ENCODE measurements at regions of chr4 and their contacts with region 1.

Region 1: GRCh38 chr4:24991015-24991414 is 39.7 kb downstream of the LGI2 start:
- DNase-seq: no peak
- ATAC-seq: no peak
- H3K4me3 ChIP-seq: no peak overlapping the region
- H3K27ac ChIP-seq: no peak overlapping the region
- H3K4me1 ChIP-seq: no peaks in the 10 kb centered on the region
- H3K27me3 ChIP-seq: no peaks in the 10 kb centered on the region
- CTCF ChIP-seq: no peak

Region 2: DNA sequence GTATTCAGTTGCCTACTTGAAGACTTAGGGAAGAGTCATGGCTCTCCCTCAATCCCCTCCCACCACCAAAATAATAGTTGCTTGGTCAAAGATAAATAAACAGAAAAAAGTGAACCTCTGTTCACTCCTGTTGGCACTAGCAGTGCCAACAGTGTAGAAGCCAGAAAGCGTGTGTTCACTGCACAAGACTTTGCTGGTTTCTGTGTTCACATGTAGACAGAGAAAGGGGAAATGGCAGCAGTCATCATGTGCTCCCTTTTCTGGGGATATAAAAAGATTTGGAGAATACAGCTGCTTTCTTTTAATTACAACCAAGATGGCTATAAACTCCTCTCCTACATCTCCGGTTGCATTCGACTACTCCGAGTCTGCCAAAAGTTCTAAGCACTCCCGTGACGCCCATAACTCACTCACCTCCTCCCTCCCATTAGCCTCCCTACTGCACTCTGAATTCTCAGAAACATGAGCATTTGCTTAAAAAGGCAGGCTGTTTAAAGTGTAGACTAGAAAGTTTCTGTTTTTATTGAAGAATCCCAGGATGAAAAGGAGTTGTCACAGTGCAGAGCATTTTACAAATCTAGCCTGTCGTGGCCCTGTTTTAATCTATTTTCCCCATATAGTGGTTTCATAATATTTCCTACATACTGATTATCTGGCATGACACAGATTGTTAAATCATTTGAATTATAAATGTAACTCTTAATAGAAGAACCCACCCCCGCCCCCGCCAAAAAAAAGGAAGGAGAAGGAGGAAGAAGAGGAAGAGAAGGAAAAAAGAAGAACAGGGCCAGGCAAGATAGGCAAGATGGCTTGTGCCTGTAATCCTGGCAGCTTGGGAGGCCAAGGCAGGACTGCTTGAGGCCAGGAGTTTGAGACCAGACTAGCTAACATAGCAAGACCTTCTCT is 23.0 kb after region 1 on chr4:
- CTCF ChIA-PET with region 1: no interaction called
- POLR2A ChIA-PET with region 1: no interaction called
- in situ Hi-C with region 1: no loop called
- intact Hi-C with region 1: no loop called
- DNase-seq: no peak
- ATAC-seq: no peak
- H3K4me3 ChIP-seq: no peak overlapping the region
- H3K27ac ChIP-seq: no peak overlapping the region
- H3K4me1 ChIP-seq: no peaks in the 10 kb centered on the region
- H3K27me3 ChIP-seq: no peaks in the 10 kb centered on the region
- CTCF ChIP-seq: no peak

Region 3: GRCh38 chr4:25144870-25145481 is 154.0 kb after region 1 on chr4:
- CTCF ChIA-PET with region 1: no interaction called
- POLR2A ChIA-PET with region 1: no interaction called
- in situ Hi-C with region 1: no loop called
- intact Hi-C with region 1: loop called (anchors 10 kb)
- DNase-seq: no peak
- ATAC-seq: no peak
- H3K4me3 ChIP-seq: no peak overlapping the region
- H3K27ac ChIP-seq: no peak overlapping the region
- H3K4me1 ChIP-seq: no peaks in the 10 kb centered on the region
- H3K27me3 ChIP-seq: no peaks in the 10 kb centered on the region
- CTCF ChIP-seq: peak; percentile 66; the same call in 1 of the 2 replicates

Measured in Panc1 (cell line).